Motor neuron (in vitro differentiated cells): ENCODE measurements at regions of chr2 and their contacts with region 1.

Region 1: GRCh38 chr2:164737612-164738081 is 104.0 kb downstream of the COBLL1 start:
- ATAC-seq: peak; percentile 44 to 83 (median 68)
- H3K4me3 ChIP-seq: no peak overlapping the region
- H3K27ac ChIP-seq: no peak overlapping the region
- H3K4me1 ChIP-seq: no peaks in the 10 kb centered on the region

Region 2: GRCh38 chr2:164839914-164840457 is 102.3 kb after region 1 on chr2:
- in situ Hi-C with region 1: loop called in 1 of 9 experiments (anchors 10 kb)
- ATAC-seq: peak in 1 of 8 experiments; percentile 4
- H3K4me3 ChIP-seq: peak overlapping the region in 3 of 5 donors; percentile 49 to 57 (median 53)
- H3K27ac ChIP-seq: no peak overlapping the region
- H3K4me1 ChIP-seq: peaks cover 0 to 4% of the 10 kb centered on the region in 2 donors

Region 3: DNA sequence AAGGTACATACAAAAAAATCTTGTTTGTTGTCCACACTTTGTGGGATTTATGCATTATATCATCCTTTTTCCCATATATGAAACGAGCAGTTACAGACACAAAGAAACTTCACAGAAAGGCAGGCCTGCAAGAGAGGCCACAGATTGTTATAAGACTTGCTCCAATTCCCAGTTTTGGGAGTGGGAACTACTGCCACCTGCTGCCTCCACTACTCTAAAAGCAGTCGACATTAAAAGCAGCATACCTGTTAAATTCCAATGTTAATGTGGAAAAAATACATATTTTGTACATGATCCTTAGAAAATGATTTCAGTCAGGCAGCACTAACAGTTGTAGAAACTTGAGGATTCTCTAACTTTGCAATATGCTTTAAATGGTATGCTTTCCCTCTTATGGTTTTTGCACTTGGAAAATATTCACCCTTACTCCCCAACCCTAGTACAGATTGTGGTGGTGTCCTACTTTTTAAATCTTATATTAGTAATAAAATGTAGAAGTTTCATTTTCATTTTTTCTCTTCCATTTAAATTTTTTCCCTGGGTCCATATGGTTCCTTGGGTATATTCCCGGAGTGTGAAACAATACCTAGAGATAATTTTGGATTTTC is 179.8 kb after region 1 on chr2:
- in situ Hi-C with region 1: loop called in 3 of 9 experiments (anchors 25 kb)
- ATAC-seq: peak in 3 of 8 experiments; percentile 12 to 87 (median 47)
- H3K4me3 ChIP-seq: no peak overlapping the region
- H3K27ac ChIP-seq: no peak overlapping the region
- H3K4me1 ChIP-seq: peaks cover 5 to 10% of the 10 kb centered on the region in 2 donors

Region 4: DNA sequence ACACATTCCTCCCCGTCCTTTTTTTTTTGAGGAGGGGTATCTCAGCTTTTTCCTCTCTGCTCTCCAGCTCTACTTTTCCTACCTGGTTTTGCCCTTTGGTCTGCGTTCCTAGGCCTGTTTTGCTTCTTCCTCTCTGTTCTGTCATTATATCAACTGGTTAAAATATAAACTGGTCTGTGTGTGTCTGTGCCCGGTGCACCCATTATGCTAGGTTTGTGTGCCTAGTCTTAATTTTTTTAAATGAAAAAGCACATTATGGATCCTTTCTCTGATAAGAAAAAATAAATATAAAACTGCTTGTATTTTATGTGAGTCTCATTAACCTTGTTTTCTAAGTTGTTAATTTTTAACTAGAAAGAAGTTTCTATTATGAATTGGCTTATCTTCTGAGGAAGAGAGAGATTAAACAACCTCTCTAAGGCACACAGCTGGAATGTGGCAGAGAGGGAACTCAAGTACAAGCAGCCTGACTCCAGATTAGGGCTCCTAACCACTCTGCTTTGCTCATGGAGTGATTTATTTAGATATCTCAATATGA is 200.3 kb after region 1 on chr2:
- in situ Hi-C with region 1: loop called in 1 of 9 experiments (anchors 25 kb)
- ATAC-seq: no peak
- H3K4me3 ChIP-seq: no peak overlapping the region
- H3K27ac ChIP-seq: no peak overlapping the region
- H3K4me1 ChIP-seq: no peaks in the 10 kb centered on the region